Esophagus squamous epithelium (tissue), 5 donors: ENCODE measurements at regions of chr1 and their contacts with region 1.

Region 1: GRCh38 chr1:13662493-13662892 is 37.5 kb upstream of the PRDM2 start:
- DNase-seq: no peak
- H3K4me3 ChIP-seq: no peak overlapping the region
- H3K27ac ChIP-seq: peak overlapping the region; percentile 59 to 72 (median 68)
- H3K4me1 ChIP-seq: peaks cover 4 to 55% (median 28%) of the 10 kb centered on the region in 3 donors
- H3K27me3 ChIP-seq: no peaks in the 10 kb centered on the region
- CTCF ChIP-seq: no peak
- POLR2A ChIP-seq: no peak

Region 2: DNA sequence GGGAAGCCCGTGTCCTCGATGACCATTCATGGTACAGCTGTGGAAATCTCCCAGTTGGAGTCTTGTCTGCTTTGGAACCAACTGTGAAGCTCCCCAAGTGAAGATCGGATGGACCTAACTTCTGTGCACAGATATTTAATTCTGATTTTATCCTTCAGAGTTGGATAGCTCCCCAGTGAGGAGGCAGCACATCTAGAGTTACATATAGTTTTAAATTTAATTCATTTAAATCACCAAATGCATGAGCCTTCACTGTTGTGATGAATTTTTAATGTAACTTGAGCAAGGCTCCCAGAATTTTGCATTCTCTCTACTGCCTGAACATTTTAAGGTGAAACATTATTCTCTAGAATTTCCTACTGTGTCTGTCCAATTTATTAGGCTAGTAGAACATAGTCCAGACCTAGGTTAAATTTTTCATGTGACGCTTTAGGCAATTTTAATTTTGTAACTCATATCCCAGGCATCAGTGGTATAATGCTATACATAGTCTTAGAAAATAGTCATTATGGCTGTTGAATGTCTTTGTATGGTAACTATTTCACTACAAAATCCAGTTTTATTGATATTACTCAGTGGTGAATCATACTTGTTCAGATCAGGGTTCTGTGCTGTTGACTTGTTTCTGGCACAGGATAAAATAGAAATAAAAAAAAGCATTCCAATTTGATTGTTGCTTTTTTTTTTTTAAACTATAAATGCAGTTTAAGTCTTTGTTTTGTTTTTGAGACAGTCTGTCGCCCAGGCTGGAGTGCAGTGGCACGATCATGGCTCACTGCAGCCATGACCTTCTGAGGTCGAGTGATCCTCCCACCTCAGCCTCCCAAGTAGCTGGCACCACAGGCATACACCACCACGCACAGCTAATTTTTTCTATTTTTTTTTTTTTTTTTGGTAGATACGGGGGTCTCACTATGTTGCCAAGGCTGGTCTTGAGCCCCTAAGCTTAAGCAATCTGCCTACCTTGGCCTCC is 104.4 kb after region 1 on chr1:
- intact Hi-C with region 1: no loop called
- DNase-seq: no peak
- H3K4me3 ChIP-seq: no peak overlapping the region
- H3K27ac ChIP-seq: no peak overlapping the region
- H3K4me1 ChIP-seq: peaks cover 5 to 75% (median 21%) of the 10 kb centered on the region in 3 donors
- H3K27me3 ChIP-seq: no peaks in the 10 kb centered on the region
- CTCF ChIP-seq: no peak
- POLR2A ChIP-seq: no peak

Region 3: GRCh38 chr1:13807213-13807612 is 144.7 kb after region 1 on chr1:
- intact Hi-C with region 1: loop called (anchors 10 kb)
- DNase-seq: no peak
- H3K4me3 ChIP-seq: no peak overlapping the region
- H3K27ac ChIP-seq: no peak overlapping the region
- H3K4me1 ChIP-seq: peaks cover under 1 to 47% (median 2%) of the 10 kb centered on the region in 3 donors
- H3K27me3 ChIP-seq: no peaks in the 10 kb centered on the region
- CTCF ChIP-seq: peak in 3 of 6 experiments; percentile 32 to 61 (median 32)
- POLR2A ChIP-seq: no peak

Region 4: DNA sequence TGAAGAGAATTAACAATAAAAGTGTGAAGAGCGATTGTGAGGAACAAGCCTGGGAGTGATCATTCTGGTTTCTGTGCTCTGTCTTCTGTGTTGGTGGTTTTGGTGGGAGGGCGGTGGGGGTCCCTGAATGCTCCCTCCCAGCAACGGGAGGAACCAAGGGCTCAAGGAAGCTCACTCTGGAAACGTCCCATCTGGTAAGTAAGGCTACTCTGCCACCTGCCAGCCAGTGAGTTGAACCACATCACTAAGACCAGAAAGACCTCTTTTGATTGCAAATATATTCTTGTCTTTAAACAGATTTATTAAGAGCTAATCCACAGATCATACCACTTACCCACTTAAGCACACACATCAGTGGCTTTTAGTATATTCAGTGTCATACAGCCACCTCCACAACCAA is 162.5 kb after region 1 on chr1:
- intact Hi-C with region 1: no loop called
- DNase-seq: no peak
- H3K4me3 ChIP-seq: no peak overlapping the region
- H3K27ac ChIP-seq: no peak overlapping the region
- H3K4me1 ChIP-seq: peaks cover 7 to 26% (median 12%) of the 10 kb centered on the region in 3 donors
- H3K27me3 ChIP-seq: no peaks in the 10 kb centered on the region
- CTCF ChIP-seq: no peak
- POLR2A ChIP-seq: no peak